Naive thymus-derived CD4-positive, alpha-beta T cell (primary cell): ENCODE measurements at regions of chr6 and their contacts with region 1.

Region 1: DNA sequence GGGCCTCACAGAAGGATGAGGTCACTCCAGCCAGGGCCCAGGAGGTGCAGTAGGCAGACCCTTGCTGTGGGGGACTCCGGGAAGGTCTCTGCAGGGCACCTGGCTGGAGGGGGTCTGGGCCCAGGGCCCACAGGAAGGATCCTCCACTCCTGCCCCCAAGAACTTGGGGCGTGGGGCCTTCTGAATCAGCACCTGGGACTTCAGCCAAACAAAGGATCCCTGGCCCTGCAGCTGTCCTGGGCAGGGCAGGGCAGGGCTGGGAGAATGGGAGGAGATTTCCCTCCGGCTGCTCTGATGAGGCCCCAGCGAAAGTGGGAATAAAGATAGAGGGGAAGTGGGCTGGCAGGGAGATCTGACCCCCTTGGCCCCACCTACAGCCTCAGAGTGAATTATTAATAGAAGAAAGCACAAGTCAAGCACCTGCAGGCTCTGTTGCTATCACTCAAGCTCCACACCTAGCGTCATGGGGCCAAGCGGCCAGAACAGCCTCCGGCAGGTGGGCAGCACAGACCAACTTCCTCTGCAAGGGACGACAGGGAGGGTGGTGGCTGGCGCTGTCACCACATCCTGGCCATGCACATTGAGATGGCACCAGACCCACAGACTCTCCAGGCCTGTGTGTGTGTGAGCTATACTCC is 61.6 kb upstream of the MRPS10 start:
- DNase-seq: peak in 4 of 9 donors; percentile 7 to 14 (median 12)
- ATAC-seq: peak; percentile 75
- H3K4me3 ChIP-seq: no peak overlapping the region
- H3K4me3 Mint-ChIP-seq: peak overlapping the region; percentile 1 to 68 (median 42)
- H3K27ac ChIP-seq: no peak overlapping the region
- H3K27ac Mint-ChIP-seq: peak overlapping the region; percentile 64 to 90 (median 79)
- H3K4me1 ChIP-seq: peaks cover 43 to 48% of the 10 kb centered on the region in 2 donors
- H3K4me1 Mint-ChIP-seq: peaks cover 36 to 62% (median 54%) of the 10 kb centered on the region in 7 donors
- H3K27me3 ChIP-seq: no peaks in the 10 kb centered on the region
- H3K27me3 Mint-ChIP-seq: no peaks in the 10 kb centered on the region

Region 2: GRCh38 chr6:42251911-42252637 is 27.2 kb before region 1 on chr6:
- CTCF ChIA-PET with region 1: no interaction called
- POLR2A ChIA-PET with region 1: no interaction called
- intact Hi-C with region 1: no loop called
- DNase-seq: no peak
- ATAC-seq: no peak
- H3K4me3 ChIP-seq: no peak overlapping the region
- H3K4me3 Mint-ChIP-seq: no peak overlapping the region
- H3K27ac ChIP-seq: no peak overlapping the region
- H3K27ac Mint-ChIP-seq: no peak overlapping the region
- H3K4me1 ChIP-seq: no peaks in the 10 kb centered on the region
- H3K4me1 Mint-ChIP-seq: no peaks in the 10 kb centered on the region
- H3K27me3 ChIP-seq: no peaks in the 10 kb centered on the region
- H3K27me3 Mint-ChIP-seq: no peaks in the 10 kb centered on the region

Region 3: GRCh38 chr6:42294759-42295158 is 15.5 kb after region 1 on chr6:
- CTCF ChIA-PET with region 1: no interaction called
- POLR2A ChIA-PET with region 1: interaction called, 3 read pairs
- intact Hi-C with region 1: loop called in 1 of 2 experiments (anchors 2 kb)
- DNase-seq: no peak
- ATAC-seq: peak; percentile 66
- H3K4me3 ChIP-seq: no peak overlapping the region
- H3K4me3 Mint-ChIP-seq: peak overlapping the region in 6 of 10 donors; percentile 1 to 69 (median 25)
- H3K27ac ChIP-seq: no peak overlapping the region
- H3K27ac Mint-ChIP-seq: peak overlapping the region in 5 of 9 donors; percentile 10 to 76 (median 67)
- H3K4me1 ChIP-seq: peaks cover 8 to 48% of the 10 kb centered on the region in 2 donors
- H3K4me1 Mint-ChIP-seq: peaks cover 30 to 69% (median 54%) of the 10 kb centered on the region in 7 donors
- H3K27me3 ChIP-seq: no peaks in the 10 kb centered on the region
- H3K27me3 Mint-ChIP-seq: no peaks in the 10 kb centered on the region